Aorta (tissue), 5 donors: ENCODE measurements at regions of chr12 and their contacts with region 1.

Region 1: DNA sequence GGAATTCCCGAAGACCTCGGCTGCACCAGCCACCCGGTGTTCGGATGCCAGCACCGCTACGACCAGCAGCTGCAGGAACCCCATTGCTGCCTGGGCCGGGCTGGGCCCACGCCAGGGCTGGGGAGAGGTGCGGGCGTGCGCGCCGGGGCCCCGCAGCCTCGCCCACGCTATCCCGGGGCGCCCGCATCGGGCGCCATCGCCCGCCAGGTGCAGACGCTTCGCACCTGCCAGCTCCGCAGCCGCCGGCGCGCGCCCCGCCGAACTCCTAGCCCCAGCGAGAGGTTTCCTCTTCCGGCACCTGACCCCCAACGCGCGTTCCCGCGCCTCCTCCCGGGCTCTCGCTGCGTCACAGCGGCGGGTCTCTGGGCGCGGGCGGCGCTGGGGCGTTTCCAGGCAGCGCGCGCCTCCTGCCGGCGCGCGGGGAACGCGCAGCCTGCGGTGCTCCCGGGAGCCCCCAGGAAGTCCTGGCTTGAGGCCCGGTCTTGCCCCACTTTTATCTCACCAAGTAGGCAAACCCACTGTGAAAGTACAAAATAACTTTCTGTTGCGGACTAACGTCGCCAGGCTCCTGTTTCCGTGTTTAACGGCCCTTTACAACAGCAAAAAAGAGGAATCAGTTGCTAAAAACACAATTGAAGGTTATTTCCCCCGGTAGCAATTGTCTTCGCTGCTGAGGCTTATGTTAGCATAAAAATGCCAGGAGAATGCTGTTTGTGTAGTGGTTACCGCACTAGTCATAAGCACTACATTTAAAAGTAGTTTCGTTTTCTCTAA is at the start of gene TM7SF3:
- DNase-seq: peak; percentile 96 to 97
- ATAC-seq: peak; percentile 97
- H3K4me3 ChIP-seq: peak within 1 kb of the TSS; percentile 60 to 80
- H3K27ac ChIP-seq: peak within 1 kb of the TSS; percentile 59 to 90
- H3K4me1 ChIP-seq: peaks cover 3 to 14% of the 10 kb centered on the region in 2 donors
- H3K27me3 ChIP-seq: no peaks in the 10 kb centered on the region
- total RNA-seq, gene TM7SF3: 49.7 to 56.1 TPM

Region 2: DNA sequence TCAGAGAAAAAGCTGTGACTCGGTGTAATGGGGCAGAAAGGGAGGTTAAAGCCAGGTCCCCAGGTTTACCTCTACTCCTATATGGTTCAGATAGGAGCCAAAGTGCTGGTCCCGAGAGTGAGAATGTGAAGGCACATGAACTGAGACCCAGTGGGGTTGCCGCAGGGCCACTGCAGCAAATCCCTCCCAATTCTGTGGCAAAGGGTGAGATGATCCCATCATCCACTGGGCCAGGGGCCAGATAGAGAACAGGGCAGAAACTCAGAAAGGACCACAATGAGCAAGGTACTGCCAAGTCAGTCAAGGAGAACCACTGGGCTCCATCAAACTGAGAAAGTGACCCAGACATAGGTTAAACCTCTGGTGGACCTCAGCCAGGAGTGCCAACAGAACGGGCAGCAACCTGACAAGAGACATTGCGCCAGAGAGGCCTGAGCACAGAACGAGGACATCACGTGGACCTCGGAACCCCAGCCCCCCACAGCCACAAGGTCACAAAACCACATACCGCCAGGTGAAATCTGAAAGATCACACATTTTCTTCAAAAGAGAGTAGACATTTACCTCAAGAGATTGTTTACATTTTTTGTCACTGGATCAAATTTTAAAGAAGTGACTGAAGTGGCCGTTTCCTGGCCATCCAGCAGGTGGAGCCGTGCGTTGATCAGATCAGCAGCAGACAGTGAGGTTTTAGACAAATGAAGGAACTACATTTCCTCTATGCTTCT is 160.8 kb before region 1 on chr12:
- intact Hi-C with region 1: loop called in 1 of 2 experiments (anchors 10 kb)
- DNase-seq: peak; percentile 78 to 87
- ATAC-seq: peak; percentile 86
- H3K4me3 ChIP-seq: no peak overlapping the region
- H3K27ac ChIP-seq: no peak overlapping the region
- H3K4me1 ChIP-seq: no peaks in the 10 kb centered on the region
- H3K27me3 ChIP-seq: no peaks in the 10 kb centered on the region

Region 3: DNA sequence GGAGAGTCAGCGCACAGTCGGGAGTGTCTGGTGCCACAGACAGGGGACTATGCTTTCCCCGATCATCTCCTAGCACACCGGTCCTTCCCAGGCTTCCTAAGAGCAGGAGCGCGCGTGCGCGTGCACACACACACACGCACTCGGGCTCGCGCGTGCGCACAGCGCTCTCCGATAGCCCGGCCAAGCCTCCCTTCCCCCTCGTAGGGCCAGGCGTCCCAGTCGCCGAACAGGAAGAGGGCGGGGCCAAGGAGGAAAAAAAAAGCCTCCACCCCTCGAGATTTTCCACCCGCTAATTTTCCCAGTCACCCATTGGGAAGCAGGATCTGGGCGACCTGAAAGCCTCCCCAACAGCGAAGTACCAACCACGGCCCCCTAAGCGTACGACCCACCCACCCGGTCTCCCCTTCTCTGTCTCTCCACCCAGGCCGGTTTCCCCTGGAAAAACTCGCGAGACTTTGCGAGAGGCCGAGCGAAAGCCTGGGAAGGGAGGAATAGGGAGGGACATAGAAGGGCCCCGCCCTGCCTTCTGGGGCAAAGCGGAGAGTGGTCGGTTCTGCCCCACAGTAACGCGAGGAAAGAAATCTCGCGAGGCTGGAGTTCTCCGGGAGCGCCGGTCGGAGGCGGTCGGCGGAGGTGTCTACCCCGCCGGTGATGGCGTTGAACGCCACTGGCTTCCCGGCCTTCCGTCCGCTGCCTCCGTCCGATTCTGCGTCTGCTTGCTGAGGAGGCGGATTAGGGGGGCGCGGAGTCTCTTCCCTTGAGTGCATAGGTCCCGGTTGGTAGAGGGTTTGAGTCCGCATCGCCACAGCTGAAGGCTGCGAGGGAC is 76.2 kb before region 1 on chr12 and contains the starts of genes FGFR1OP2 and INTS13:
- intact Hi-C with region 1: loop called (anchors 5 kb)
- DNase-seq: peak; percentile 99 to 100
- ATAC-seq: peak; percentile 99
- H3K4me3 ChIP-seq: peak within 1 kb of the TSS; percentile 61 to 96
- H3K27ac ChIP-seq: peak within 1 kb of the TSS; percentile 49 to 92
- H3K4me1 ChIP-seq: no peaks in the 10 kb centered on the region
- H3K27me3 ChIP-seq: no peaks in the 10 kb centered on the region
- total RNA-seq, gene FGFR1OP2: 55.2 to 67.4 TPM
- total RNA-seq, gene INTS13: 15.1 to 19.2 TPM

Region 4: DNA sequence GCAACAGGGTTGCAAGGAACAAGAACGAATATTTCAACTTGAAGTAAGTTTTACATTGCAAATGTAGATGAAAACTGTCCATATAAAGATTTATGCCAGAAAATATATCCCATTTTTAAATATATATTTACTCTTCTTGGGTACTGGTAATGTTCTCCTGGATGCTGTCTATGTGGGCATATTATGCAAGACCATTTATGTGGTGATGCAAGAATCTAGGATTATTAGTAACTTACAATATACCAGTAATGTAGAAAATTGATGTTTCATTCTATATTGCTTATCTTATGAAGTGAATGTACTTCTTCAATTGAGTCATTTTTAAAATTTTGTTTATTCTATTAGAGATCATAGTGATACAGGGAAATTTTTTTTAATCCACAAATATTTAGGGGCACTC is 50.9 kb before region 1 on chr12:
- intact Hi-C with region 1: no loop called
- DNase-seq: no peak
- ATAC-seq: no peak
- H3K4me3 ChIP-seq: no peak overlapping the region
- H3K27ac ChIP-seq: no peak overlapping the region
- H3K4me1 ChIP-seq: no peaks in the 10 kb centered on the region
- H3K27me3 ChIP-seq: no peaks in the 10 kb centered on the region

Region 5: GRCh38 chr12:26976687-26977086 is 37.6 kb before region 1 on chr12:
- intact Hi-C with region 1: no loop called
- DNase-seq: no peak
- ATAC-seq: no peak
- H3K4me3 ChIP-seq: no peak overlapping the region
- H3K27ac ChIP-seq: no peak overlapping the region
- H3K4me1 ChIP-seq: no peaks in the 10 kb centered on the region
- H3K27me3 ChIP-seq: no peaks in the 10 kb centered on the region